Activated CD4-positive, alpha-beta memory T cell treated with anti-CD3 and anti-CD28 coated beads, Interleukin-2, amount 10 ng/mL, durations not matched to agents 7 days and 5 days (primary cell): ENCODE measurements at regions of chr12 and their contacts with region 1.

Region 1: DNA sequence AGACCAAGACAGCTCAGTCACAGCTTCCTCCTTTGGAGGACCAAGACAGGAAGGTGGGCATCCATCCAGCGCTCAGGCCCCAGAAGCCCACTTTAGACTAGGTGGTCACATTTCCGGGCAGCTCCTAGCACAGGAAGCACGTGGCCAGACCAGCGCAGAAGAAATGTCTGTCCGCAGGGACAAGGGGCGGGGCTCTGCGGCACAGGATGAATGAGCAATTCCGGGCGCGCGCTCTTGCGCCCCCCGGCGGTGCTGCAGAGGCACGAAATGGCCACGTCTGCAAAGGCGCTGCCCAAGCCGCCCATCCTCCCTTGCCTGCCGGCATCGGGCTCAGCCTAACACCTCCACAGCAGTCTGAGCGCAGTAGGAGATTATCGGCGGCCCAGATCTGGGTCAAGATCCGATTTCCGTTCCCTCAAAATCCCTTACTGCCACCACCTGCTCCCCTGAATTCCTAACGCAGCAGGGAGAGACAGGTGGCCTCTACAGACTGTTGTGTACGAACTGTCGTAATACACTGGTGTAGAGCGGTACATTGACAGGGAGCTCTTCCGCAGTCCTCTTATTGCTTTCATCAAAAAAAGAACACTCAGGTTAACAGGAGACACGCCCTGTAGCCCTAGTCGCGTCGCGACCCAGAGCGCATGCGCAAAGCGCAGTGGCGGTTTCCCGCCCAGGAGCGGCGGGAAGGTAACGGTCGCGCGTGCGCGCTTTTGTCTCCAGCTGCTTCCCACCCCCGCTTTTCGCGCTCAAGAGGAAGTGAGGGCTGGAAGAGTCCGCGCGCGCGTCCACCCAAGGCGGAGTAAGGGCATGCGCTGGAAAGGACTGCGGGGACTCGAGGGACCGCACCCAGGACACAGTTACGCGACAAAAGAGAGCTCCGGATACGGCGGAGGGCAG is 794 bp downstream of the TUBA1B start:
- DNase-seq: peak; percentile 92
- H3K4me3 Mint-ChIP-seq: peak overlapping the region; percentile 96
- H3K27ac Mint-ChIP-seq: peak overlapping the region; percentile 97
- H3K4me1 Mint-ChIP-seq: peaks cover 54% of the 10 kb centered on the region
- H3K27me3 Mint-ChIP-seq: no peaks in the 10 kb centered on the region

Region 2: DNA sequence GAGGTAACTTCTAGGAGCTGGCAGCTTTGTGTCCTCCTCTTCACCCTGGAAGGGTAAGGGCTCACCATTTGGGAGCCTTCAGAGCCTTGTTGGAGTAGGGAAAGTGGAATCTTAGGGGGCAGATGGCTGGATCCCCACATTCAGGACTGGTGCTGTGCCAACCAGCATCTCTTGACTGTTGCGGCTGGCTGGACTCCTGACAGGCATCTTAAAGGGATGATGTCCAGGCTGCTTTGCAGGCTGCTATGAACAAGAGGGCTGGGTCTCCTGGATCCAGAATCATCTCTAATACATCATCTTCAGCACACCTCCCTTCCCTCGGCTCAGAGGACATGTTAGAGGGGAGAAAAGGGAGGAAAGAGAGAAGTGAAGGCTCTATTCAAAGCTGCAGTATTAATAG is 307.7 kb before region 1 on chr12:
- CTCF ChIA-PET with region 1: no interaction called
- POLR2A ChIA-PET with region 1: no interaction called
- DNase-seq: no peak
- H3K4me3 Mint-ChIP-seq: no peak overlapping the region
- H3K27ac Mint-ChIP-seq: no peak overlapping the region
- H3K4me1 Mint-ChIP-seq: peaks cover 31% of the 10 kb centered on the region
- H3K27me3 Mint-ChIP-seq: peaks cover 6% of the 10 kb centered on the region

Region 3: DNA sequence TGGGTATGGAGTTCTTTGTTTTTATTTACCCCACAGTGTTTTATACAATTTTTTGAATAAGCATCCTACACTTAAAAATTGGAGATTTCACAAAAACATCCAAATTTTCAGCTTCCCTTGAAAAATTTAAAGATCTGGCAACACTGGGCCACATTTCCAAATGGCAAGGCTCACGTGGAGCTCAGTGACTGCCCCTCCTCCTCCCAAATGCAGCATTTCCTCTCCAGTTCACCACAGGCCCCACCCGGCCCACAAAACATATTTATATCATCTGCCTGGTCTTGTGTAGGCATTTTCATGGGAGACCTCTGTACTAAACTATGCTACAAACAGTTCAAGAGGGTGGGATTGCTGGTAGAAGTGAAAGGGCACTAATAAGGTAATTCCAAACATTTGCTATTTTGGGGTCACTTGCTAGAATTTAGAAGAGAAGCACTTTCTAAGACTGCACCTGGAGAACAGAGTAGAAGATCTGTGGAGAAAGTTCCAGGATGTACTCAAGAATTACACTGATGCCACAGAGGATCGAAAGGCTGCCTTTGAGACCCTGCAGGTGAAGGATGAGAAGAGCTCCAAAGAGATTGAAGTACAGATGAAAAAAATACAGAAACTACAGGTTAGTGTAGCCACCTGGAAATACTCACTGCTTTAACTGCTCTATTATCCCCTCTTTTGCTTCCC is 212.4 kb before region 1 on chr12:
- CTCF ChIA-PET with region 1: no interaction called
- POLR2A ChIA-PET with region 1: no interaction called
- DNase-seq: peak; percentile 65
- H3K4me3 Mint-ChIP-seq: peak overlapping the region; percentile 81
- H3K27ac Mint-ChIP-seq: peak overlapping the region; percentile 85
- H3K4me1 Mint-ChIP-seq: peaks cover 34% of the 10 kb centered on the region
- H3K27me3 Mint-ChIP-seq: no peaks in the 10 kb centered on the region

Region 4: GRCh38 chr12:49049566-49050413 is 80.6 kb before region 1 on chr12:
- CTCF ChIA-PET with region 1: no interaction called
- POLR2A ChIA-PET with region 1: no interaction called
- DNase-seq: no peak
- H3K4me3 Mint-ChIP-seq: no peak overlapping the region
- H3K27ac Mint-ChIP-seq: no peak overlapping the region
- H3K4me1 Mint-ChIP-seq: peaks cover 2% of the 10 kb centered on the region
- H3K27me3 Mint-ChIP-seq: no peaks in the 10 kb centered on the region

Region 5: DNA sequence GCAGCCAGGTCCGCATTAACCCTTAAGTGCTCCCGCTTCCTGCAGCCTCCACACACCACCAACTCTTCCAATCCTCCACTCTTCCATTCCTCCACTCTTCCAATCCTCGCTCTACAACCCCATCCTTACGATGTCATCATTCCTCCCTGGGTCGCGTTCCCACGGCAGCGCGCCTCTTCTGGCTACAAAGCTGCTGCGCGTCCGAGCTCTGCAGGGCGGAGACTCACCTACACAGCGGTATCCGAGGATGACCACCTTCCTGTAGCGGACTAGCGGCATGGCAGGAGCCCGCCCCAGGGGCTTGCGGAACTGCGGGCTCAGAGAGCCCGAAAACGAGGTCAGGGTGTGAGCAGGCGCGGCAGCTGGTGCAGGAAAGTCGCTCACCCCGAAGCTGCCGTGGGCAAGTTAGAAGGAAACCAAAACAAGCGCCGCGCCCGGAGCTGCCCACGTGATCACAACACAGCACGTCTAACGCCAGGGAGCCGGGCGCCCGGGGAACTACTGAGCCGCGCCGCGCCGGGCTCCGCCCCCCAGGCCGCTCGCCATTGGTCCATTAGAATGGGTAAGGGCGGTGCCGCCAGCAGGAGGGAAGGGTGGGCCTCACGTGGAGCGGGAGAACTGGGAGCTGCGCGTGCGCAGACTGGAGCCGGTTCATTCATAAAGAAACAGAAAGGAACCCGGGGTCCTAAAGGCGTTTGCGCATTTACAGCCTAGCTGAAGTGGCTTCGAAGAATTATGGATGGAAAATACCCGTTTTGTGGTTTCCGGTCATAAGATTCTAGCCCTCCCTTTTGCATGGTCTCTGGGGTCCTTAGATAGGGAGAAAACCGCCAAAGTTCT is 60.7 kb before region 1 on chr12 and contains the start of gene RHEBL1:
- CTCF ChIA-PET with region 1: interaction called, 15 read pairs
- POLR2A ChIA-PET with region 1: interaction called, 55 read pairs
- DNase-seq: peak; percentile 100
- H3K4me3 Mint-ChIP-seq: peak within 1 kb of the TSS; percentile 97
- H3K27ac Mint-ChIP-seq: peak within 1 kb of the TSS; percentile 86
- H3K4me1 Mint-ChIP-seq: peaks cover 33% of the 10 kb centered on the region
- H3K27me3 Mint-ChIP-seq: no peaks in the 10 kb centered on the region
- total RNA-seq, gene RHEBL1: 14.8 to 15.8 TPM

Region 6: GRCh38 chr12:49110464-49111155 is 19.8 kb before region 1 on chr12 and contains the start of gene LMBR1L:
- CTCF ChIA-PET with region 1: interaction called, 35 read pairs
- POLR2A ChIA-PET with region 1: interaction called, 132 read pairs
- DNase-seq: peak; percentile 97
- H3K4me3 Mint-ChIP-seq: peak within 1 kb of the TSS; percentile 88
- H3K27ac Mint-ChIP-seq: peak within 1 kb of the TSS; percentile 82
- H3K4me1 Mint-ChIP-seq: peaks cover 31% of the 10 kb centered on the region
- H3K27me3 Mint-ChIP-seq: peaks cover 2% of the 10 kb centered on the region
- total RNA-seq, gene LMBR1L: 82.8 to 85.3 TPM

Region 7: DNA sequence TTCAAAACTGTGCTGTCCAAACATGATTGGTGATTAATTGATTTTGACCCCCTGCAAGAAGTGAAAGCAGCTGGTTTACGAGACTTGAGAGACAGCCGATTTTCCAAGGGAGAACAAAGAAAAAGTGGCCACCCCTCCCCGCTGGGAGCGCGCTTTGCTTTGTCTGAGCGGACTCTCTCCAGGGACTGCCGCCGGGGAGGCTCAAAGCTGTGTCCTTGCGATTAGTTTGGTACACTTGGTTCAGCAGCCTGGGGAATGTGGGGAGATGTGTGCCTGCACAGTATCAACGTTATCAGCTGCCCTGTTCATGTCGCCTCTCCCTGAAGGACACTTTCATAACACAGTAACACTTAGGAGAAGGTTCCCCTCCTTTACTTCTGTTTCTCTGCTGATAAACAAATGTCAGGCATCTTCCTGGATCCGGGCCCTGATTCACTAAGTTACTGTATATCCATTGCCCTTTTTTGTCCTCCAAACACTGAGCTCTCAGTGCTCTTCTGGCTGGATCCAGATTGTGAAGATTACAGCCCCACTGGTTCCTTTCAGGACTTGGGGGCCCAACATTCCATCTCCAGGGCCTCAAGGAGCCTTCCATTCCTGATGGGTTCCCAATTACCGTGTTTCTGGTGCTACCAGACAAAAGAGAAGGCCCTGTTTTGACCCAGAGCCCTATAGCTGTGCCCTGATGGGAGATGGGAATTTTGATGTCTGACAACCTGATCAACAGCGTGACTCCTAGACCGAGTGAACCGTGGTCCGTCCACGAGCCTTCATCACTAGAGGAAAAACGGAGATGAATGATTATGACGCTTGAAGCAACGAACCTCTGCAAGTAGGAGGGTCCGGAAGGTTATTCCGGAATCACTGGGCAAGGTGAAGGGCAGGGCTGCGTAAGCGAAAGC is 102.8 kb after region 1 on chr12:
- CTCF ChIA-PET with region 1: interaction called, 26 read pairs
- POLR2A ChIA-PET with region 1: interaction called, 49 read pairs
- DNase-seq: no peak
- H3K4me3 Mint-ChIP-seq: peak overlapping the region; percentile 16
- H3K27ac Mint-ChIP-seq: peak overlapping the region; percentile 45
- H3K4me1 Mint-ChIP-seq: peaks cover 25% of the 10 kb centered on the region
- H3K27me3 Mint-ChIP-seq: peaks cover 3% of the 10 kb centered on the region

Region 8: DNA sequence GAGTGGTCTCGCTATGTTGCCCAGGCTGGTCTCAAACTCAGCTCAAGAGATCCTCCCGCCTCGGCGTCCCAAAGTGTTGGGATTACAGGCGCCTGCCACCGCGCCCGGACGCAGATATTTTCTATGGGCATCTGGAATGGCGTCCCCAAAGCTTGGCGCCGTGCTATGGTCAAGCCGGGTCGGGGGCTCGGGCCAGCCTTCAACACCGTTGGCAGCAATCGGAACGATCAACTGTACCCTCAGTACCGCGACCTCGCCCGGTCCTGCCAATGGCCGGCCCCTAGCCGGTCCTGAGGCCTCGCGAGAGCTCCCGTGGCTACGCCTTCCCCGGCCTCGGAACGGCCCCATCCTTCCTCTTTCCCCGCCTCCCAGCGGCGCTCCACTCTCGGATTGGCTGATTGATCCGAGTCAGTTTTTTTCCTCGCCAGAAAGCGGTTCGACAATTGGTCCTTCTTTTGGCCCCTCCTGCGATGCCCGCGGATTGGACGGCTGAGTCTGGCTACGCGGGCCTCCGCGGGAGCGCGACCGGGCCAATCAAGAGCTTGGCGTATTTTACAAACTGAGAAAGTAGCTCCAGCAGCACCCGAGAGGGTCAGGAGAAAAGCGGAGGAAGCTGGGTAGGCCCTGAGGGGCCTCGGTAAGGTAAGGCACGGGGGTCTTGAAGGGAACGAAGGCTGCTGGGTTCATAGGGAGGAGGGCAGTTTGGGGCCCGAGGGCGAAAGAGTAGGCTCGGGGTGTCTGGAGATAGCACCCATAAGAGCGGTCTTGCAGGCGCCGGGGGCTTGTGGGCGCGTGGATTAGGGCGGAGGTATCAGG is 192.5 kb after region 1 on chr12 and contains the start of gene TROAP:
- CTCF ChIA-PET with region 1: interaction called, 9 read pairs
- POLR2A ChIA-PET with region 1: interaction called, 40 read pairs
- DNase-seq: peak; percentile 99
- H3K4me3 Mint-ChIP-seq: peak within 1 kb of the TSS; percentile 94
- H3K27ac Mint-ChIP-seq: peak within 1 kb of the TSS; percentile 86
- H3K4me1 Mint-ChIP-seq: peaks cover 33% of the 10 kb centered on the region
- H3K27me3 Mint-ChIP-seq: no peaks in the 10 kb centered on the region
- total RNA-seq, gene TROAP: 75.1 to 79.5 TPM